ENCODE measurements at regions of chr9 and their contacts with region 1.

Region 1: GRCh38 chr9:115790520-115790919 is 363.1 kb upstream of the PAPPA start:
- DNase-seq: no peak

Region 2: GRCh38 chr9:115864581-115864980 is 74.1 kb after region 1 on chr9:
- intact Hi-C with region 1: loop called (anchors 2 kb)
- DNase-seq: no peak

Region 3: GRCh38 chr9:116432051-116432450 is 641.5 kb after region 1 on chr9:
- intact Hi-C with region 1: no loop called
- DNase-seq: no peak

Measured in posterior cingulate gyrus (tissue), 11 donors.